Natural killer cell (primary cell): ENCODE measurements at regions of chr16 and their contacts with region 1.

Region 1: DNA sequence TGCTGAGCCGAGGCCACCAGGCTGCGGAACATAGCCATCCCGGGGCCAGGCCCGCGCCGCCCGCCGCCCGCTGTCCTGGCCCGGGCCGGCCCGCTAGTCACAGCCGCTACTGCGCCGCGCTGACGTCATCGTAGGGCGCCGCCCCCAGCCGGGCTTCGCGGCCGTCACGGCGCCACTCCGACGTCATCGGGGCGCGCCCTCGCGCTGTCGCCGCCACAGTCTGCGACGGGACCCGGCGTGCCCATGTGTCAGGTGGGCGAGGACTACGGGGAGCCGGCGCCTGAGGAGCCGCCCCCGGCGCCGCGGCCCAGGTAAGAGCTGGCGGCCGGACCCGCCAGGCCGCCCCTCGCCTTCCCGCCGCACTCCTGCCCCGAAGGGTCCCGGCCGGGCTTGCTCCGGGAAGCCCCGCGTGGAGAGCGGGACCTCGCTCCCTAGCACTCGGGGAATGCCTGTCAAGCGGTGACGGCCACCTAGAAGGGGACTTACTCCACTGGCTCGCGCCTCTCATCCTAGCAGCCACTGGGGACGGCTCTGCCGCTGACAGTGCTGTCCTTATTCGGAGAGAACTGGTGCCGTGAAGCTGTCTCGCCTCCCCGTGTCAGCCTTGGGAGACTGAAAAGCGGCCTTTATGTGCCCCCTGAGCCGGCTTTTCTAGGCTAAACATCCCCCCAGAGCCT is at the starts of genes CTU2 and RNF166:
- DNase-seq: peak; percentile 97
- ATAC-seq: peak; percentile 62 to 85 (median 71)
- H3K4me3 ChIP-seq: peak within 1 kb of the TSS; percentile 81
- H3K4me3 Mint-ChIP-seq: peak within 1 kb of the TSS; percentile 94
- H3K27ac ChIP-seq: peak within 1 kb of the TSS; percentile 83
- H3K27ac Mint-ChIP-seq: peak within 1 kb of the TSS; percentile 89 to 96
- H3K4me1 ChIP-seq: peaks cover 62% of the 10 kb centered on the region
- H3K4me1 Mint-ChIP-seq: peaks cover 48 to 58% of the 10 kb centered on the region in 2 donors
- H3K27me3 ChIP-seq: no peaks in the 10 kb centered on the region
- H3K27me3 Mint-ChIP-seq: no peaks in the 10 kb centered on the region
- CTCF ChIP-seq: no peak
- total RNA-seq, gene CTU2: 36.6 to 43.3 (median 39.9) TPM
- total RNA-seq, gene RNF166: 459 to 712 (median 501) TPM

Region 2: DNA sequence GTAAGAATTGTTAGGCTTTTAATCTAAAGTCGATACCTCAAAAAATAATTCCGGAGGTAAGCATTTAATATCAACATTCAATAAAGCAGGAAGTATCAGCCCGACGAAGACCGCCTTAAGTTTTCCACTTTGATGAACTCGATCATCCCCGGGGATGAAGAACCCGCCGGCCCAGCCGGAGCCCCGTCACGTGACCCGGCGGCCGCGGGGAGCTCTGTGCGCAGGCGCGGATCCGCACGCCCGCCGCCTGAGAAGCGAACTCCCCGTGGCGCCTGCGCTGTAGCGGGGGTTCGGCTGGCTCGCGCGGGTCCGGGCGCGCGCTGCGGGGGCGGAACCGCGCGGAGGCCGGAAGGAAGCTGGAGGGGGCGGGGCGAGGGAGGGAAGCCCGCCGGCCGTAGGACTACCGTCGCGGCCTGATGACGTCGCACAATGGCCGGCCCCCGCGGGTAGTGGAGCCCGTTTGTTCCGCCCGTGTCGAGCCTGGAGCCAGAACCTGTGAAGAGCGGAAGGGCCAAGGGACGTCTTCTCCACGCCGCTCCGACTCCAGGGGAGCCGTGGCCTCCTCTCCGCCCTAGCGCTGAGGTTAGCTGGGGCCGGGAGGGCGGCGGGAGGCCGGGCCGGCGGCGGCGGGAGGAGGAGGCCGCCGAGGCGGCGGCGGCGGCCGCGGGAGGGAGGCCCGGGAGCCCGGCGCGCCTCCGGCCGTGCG is 136.3 kb before region 1 on chr16 and contains the start of gene ZC3H18:
- intact Hi-C with region 1: loop called (anchors 1 kb)
- DNase-seq: peak; percentile 98 to 100
- ATAC-seq: peak; percentile 93 to 98 (median 94)
- H3K4me3 ChIP-seq: peak within 1 kb of the TSS; percentile 70
- H3K4me3 Mint-ChIP-seq: peak within 1 kb of the TSS; percentile 86
- H3K27ac ChIP-seq: peak within 1 kb of the TSS; percentile 77
- H3K27ac Mint-ChIP-seq: peak within 1 kb of the TSS; percentile 84 to 87
- H3K4me1 ChIP-seq: peaks cover 18% of the 10 kb centered on the region
- H3K4me1 Mint-ChIP-seq: peaks cover 25 to 36% of the 10 kb centered on the region in 2 donors
- H3K27me3 ChIP-seq: no peaks in the 10 kb centered on the region
- H3K27me3 Mint-ChIP-seq: no peaks in the 10 kb centered on the region
- CTCF ChIP-seq: no peak
- total RNA-seq, gene ZC3H18: 125 to 130 (median 126) TPM

Region 3: GRCh38 chr16:88662843-88663606 is 43.4 kb before region 1 on chr16 and contains the start of gene MVD:
- intact Hi-C with region 1: loop called (anchors 2 kb)
- DNase-seq: peak; percentile 95 to 99
- ATAC-seq: peak; percentile 95 to 99 (median 95)
- H3K4me3 ChIP-seq: peak within 1 kb of the TSS; percentile 95
- H3K4me3 Mint-ChIP-seq: peak within 1 kb of the TSS; percentile 97
- H3K27ac ChIP-seq: peak within 1 kb of the TSS; percentile 87
- H3K27ac Mint-ChIP-seq: peak within 1 kb of the TSS; percentile 94 to 99
- H3K4me1 ChIP-seq: peaks cover 20% of the 10 kb centered on the region
- H3K4me1 Mint-ChIP-seq: peaks cover 12 to 28% of the 10 kb centered on the region in 2 donors
- H3K27me3 ChIP-seq: no peaks in the 10 kb centered on the region
- H3K27me3 Mint-ChIP-seq: no peaks in the 10 kb centered on the region
- CTCF ChIP-seq: no peak
- total RNA-seq, gene MVD: 176 to 271 (median 185) TPM

Region 4: GRCh38 chr16:88941913-88942909 is 235.8 kb after region 1 on chr16:
- intact Hi-C with region 1: no loop called
- DNase-seq: peak; percentile 50 to 74
- ATAC-seq: peak; percentile 69 to 84 (median 73)
- H3K4me3 ChIP-seq: no peak overlapping the region
- H3K4me3 Mint-ChIP-seq: peak overlapping the region; percentile 31
- H3K27ac ChIP-seq: no peak overlapping the region
- H3K27ac Mint-ChIP-seq: no peak overlapping the region
- H3K4me1 ChIP-seq: peaks cover 49% of the 10 kb centered on the region
- H3K4me1 Mint-ChIP-seq: peaks cover 0 to 6% of the 10 kb centered on the region in 2 donors
- H3K27me3 ChIP-seq: peaks cover 17% of the 10 kb centered on the region
- H3K27me3 Mint-ChIP-seq: peaks cover 25 to 35% of the 10 kb centered on the region in 2 donors
- CTCF ChIP-seq: peak; percentile 72